MCF 10A (cell line): ENCODE measurements at regions of chr15 and their contacts with region 1.

Region 1: DNA sequence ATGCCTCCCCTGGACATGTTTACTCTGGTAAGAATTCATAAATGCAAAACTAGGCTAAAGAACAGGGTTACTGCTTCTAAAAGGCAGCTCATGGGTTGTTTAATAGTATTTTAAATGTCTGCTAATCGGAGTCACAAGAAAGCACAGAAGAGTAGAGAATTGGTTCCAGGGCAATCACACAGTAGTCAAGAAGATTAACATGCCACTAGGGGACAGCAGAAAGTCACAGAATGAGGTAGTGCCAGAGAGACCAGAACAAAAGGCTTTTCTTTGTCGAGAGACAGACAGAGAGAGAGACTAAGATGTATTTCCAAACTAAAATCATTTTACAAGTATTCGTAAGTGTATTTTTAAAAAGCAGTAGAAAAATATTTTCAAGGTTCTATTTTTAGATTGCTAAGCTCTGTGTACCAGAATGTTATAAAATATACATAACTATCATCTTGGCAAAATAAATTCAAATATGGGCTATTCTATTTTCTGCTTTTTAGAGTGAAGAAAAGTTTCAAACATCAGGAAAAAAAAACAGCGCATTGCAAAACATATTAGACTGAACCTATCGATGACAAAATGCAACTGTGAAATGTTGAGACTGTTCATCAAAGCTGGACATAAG is 78.3 kb upstream of the CDIN1 start:
- DNase-seq: peak; percentile 69
- H3K4me3 Mint-ChIP-seq: no peak overlapping the region
- H3K27ac Mint-ChIP-seq: no peak overlapping the region
- H3K4me1 Mint-ChIP-seq: no peaks in the 10 kb centered on the region
- H3K27me3 Mint-ChIP-seq: peaks cover 33% of the 10 kb centered on the region
- CTCF ChIP-seq: peak; percentile 66

Region 2: DNA sequence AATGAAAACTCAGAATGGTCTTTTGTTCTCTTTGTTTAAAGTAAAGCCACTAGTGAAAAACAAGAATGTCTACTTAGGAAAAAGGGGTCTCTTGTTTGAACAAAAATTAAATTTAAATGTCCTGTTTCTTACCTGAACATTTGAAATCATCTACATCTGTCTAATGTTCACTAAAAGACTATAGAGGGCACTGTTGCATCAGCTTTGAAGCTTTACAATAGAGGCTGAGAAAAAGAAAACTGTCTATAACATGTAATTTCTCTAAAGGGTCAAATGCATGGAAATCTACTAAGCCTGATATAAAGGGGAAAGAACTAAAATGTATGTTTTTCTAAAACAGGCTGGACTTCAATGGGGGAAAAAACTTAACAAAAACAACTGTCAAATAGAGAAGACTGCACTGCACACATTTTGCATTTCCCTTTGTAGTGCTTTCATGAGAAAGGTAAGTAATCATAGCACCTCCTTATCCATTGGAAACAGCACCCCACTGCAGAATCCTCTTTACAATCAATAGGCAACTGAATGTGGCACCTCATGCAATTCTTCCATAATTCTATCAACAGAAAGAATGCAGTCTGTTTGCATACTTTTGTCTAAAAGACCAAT is 981.5 kb before region 1 on chr15:
- CTCF ChIA-PET with region 1: interaction called, 3 read pairs
- POLR2A ChIA-PET with region 1: no interaction called
- intact Hi-C with region 1: loop called (anchors 2 kb)
- DNase-seq: peak; percentile 64
- H3K4me3 Mint-ChIP-seq: no peak overlapping the region
- H3K27ac Mint-ChIP-seq: no peak overlapping the region
- H3K4me1 Mint-ChIP-seq: peaks cover 6% of the 10 kb centered on the region
- H3K27me3 Mint-ChIP-seq: no peaks in the 10 kb centered on the region
- CTCF ChIP-seq: peak; percentile 53

Region 3: DNA sequence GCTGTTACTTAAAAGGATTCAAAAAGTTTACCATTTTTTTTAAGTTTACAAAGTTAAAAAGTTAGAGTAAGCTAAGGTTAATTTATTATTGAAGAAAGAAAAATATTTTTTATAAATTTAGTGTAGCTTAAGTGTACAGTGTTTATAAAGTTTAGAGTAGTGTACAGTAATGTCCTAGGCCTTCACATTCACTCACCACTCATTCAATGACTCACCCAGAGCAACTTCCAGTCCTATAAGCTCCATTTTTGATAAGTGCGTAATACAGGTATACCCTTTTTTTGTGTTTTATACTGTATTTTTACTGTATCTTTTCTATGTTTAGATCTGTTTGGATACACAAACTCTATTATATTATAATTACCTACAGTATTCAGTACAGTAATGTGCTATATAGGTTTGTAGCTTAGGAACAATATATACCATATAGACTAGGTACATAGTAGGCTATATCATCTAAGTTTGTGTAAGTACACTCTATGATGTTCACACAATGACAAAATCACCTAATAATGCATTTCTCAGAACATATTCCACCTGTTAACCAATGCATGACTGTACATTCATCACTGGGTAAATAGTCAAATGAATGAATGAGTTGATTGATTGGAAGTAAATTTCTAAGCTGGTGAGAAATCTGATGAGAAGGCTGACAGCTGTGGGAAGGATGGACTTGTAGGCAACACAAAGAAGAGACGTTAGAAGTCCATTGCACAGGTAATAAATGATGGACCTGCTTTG is 17.0 kb before region 1 on chr15:
- CTCF ChIA-PET with region 1: interaction called, 10 read pairs
- POLR2A ChIA-PET with region 1: interaction called, 3 read pairs
- intact Hi-C with region 1: no loop called
- DNase-seq: no peak
- H3K4me3 Mint-ChIP-seq: no peak overlapping the region
- H3K27ac Mint-ChIP-seq: no peak overlapping the region
- H3K4me1 Mint-ChIP-seq: no peaks in the 10 kb centered on the region
- H3K27me3 Mint-ChIP-seq: no peaks in the 10 kb centered on the region
- CTCF ChIP-seq: no peak

Region 4: DNA sequence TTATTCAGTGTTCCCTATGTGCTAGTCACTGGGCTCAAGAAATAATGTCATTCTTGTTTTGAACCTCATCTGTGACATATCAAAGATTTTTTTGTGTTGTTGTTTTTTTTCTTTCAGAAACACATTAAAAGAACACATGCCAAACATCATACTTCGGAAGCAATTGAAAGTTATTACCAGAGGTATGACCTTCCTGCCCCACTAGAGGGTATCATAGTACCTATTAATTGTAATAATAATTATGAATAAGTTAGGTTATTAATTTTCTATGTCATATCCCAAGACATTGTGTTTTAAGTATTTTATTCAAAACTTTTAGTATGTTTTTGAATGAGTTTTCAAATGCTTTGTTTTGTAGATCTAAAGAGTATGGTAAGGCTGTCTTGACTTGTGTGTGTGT is 143.9 kb after region 1 on chr15:
- CTCF ChIA-PET with region 1: no interaction called
- POLR2A ChIA-PET with region 1: no interaction called
- intact Hi-C with region 1: loop called (anchors 10 kb)
- DNase-seq: no peak
- H3K4me3 Mint-ChIP-seq: no peak overlapping the region
- H3K27ac Mint-ChIP-seq: no peak overlapping the region
- H3K4me1 Mint-ChIP-seq: peaks cover 8% of the 10 kb centered on the region
- H3K27me3 Mint-ChIP-seq: no peaks in the 10 kb centered on the region
- CTCF ChIP-seq: no peak

Region 5: DNA sequence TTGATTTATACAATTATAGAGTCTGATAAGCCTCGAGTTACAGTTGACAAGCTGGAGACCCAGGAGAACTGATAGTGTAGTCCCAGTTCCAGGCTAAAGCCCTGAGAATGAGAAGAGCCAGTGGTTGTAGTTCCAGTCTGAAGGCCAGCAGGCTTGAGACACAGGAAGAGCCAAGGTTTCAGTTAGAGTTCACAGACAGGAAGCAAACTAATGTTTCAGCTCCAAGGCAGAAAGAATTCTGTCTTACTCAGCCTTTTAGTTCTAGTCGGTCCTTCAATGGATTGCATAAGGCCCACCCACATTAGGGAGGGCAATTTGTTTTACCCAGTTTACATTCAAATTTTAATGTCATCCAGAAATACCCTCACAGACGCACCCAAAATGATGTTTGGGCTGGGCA is 180.9 kb after region 1 on chr15:
- CTCF ChIA-PET with region 1: no interaction called
- POLR2A ChIA-PET with region 1: no interaction called
- intact Hi-C with region 1: no loop called
- DNase-seq: no peak
- H3K4me3 Mint-ChIP-seq: no peak overlapping the region
- H3K27ac Mint-ChIP-seq: no peak overlapping the region
- H3K4me1 Mint-ChIP-seq: no peaks in the 10 kb centered on the region
- H3K27me3 Mint-ChIP-seq: no peaks in the 10 kb centered on the region
- CTCF ChIP-seq: no peak

Region 6: GRCh38 chr15:36883713-36884517 is 382.7 kb after region 1 on chr15:
- CTCF ChIA-PET with region 1: interaction called, 3 read pairs
- POLR2A ChIA-PET with region 1: no interaction called
- intact Hi-C with region 1: loop called (anchors 5 kb)
- DNase-seq: peak; percentile 83
- H3K4me3 Mint-ChIP-seq: peak overlapping the region; percentile 23
- H3K27ac Mint-ChIP-seq: no peak overlapping the region
- H3K4me1 Mint-ChIP-seq: peaks cover 10% of the 10 kb centered on the region
- H3K27me3 Mint-ChIP-seq: peaks cover 65% of the 10 kb centered on the region
- CTCF ChIP-seq: peak; percentile 85

Region 7: DNA sequence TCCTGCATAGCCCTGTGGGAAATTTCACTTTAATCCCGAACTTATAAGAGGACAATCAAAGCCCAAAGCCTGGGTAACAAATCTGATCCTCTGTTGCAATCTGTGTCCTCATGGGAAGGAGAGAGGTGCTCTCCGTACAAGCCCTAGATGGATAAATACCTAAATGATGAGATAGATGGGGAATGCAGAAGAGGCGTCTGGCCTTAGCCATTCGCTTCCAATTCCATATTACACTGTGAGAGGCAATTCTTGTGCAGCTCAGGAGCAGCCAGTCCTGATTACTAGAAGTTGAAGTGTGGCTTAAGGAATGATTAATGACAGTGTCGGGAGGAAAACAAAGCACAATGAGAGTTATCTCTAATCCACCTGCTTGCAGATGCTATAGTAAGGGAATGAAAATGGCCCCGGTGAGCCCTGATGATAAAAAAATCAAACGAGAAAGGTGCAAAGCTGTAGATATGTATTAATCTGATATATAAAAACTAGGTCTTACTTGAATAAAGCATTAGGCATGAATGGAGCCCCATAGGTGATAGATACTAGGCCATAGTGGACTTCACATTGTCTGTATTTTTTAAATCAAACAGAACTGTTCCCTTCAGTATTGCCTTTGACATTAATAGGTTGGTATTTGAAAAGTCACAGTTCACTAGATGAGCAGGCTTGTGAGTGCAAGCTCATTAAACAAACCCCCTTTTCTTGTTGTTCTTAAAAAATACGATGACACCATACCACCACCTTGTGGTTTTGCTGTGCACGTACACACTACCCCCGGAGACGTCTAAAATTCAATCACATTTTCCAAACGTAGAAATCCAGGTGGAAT is 1379.1 kb after region 1 on chr15:
- CTCF ChIA-PET with region 1: no interaction called
- POLR2A ChIA-PET with region 1: no interaction called
- intact Hi-C with region 1: loop called (anchors 5 kb)
- DNase-seq: peak; percentile 34
- H3K4me3 Mint-ChIP-seq: no peak overlapping the region
- H3K27ac Mint-ChIP-seq: no peak overlapping the region
- H3K4me1 Mint-ChIP-seq: peaks cover 11% of the 10 kb centered on the region
- H3K27me3 Mint-ChIP-seq: peaks cover 98% of the 10 kb centered on the region
- CTCF ChIP-seq: peak; percentile 68